Prostate gland (tissue), 2 donors: ENCODE measurements at regions of chr3 and their contacts with region 1.

Region 1: DNA sequence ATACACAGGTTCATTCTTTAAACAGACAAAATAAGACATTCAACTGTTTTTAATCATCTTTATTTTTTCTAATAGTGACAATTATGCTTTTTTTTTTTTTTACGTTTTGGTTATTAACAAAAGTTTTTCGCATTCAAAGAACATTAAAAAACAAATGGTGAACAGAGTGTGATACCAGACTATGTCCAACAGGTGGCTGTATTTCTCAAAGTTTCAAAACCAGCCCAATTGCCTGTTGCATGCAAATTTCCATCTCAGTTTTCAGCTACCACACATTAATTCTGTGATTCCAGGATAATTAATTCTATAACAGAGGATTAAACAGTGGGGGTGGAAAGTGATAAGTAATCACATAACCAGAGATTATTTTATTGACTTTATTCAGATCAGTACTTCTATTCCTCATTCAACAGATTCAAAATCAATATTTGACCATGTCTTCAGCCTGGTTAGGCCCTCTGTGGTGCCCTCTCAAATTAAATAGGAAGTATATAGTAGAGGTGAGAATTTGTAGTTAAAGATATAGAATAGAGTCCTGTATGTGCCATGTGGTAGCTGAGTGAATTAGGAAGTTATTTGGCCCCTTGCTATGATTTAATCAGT is 122.2 kb upstream of the DCBLD2 start:
- DNase-seq: no peak
- H3K4me3 ChIP-seq: no peak overlapping the region
- H3K27ac ChIP-seq: no peak overlapping the region
- H3K4me1 ChIP-seq: no peaks in the 10 kb centered on the region
- H3K27me3 ChIP-seq: no peaks in the 10 kb centered on the region
- CTCF ChIP-seq: peak; percentile 11 to 73 (median 60)
- POLR2A ChIP-seq: no peak

Region 2: DNA sequence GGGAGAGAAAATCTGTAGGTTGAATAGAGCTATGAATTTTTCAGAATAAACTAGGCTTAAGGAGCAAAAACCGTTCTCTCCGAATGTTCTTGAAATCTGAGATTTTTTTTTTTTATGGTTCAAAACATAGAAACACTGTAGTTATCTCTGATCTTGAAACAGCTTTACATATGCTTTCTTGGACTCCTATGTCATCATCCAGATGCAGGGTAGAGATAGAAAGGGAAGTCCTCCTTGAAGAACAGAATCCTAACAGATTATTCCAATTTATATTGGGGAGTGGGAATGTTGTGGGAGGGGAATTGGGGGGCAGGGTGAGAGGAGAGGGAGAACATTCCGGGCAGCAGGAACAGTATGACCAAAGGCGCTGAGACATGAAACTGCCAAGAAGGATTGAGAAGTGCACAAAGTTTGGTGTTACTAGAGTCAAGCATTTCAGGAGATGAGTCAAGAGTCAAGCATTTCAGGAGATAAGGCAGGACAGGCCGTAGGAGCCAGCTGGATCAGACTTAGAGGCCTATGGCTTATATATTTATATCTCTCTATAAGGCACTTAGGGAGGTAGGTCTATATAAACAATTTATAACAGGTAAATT is 282.5 kb before region 1 on chr3:
- intact Hi-C with region 1: no loop called
- DNase-seq: no peak
- H3K4me3 ChIP-seq: no peak overlapping the region
- H3K27ac ChIP-seq: no peak overlapping the region
- H3K4me1 ChIP-seq: no peaks in the 10 kb centered on the region
- H3K27me3 ChIP-seq: no peaks in the 10 kb centered on the region
- CTCF ChIP-seq: no peak
- POLR2A ChIP-seq: no peak

Region 3: DNA sequence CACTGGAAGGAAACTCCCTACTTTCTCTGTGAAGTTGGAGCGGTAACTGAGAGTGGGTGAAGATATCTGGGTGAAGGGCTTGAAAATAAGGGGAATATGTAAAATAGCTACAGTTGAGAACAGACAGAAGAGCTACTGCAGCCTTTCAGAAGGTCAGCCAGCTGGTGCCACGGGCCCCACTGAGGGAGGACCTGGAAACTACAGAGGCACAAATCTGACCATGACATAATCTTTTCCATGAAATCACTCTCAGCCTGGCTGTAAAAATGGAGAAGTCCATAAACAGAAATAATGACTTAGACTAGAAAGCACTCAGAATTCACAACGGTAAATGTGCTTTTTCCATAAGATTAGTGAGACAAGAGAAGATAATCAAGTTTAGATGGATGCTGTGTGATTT is 214.1 kb before region 1 on chr3:
- intact Hi-C with region 1: no loop called
- DNase-seq: no peak
- H3K4me3 ChIP-seq: no peak overlapping the region
- H3K27ac ChIP-seq: no peak overlapping the region
- H3K4me1 ChIP-seq: no peaks in the 10 kb centered on the region
- H3K27me3 ChIP-seq: no peaks in the 10 kb centered on the region
- CTCF ChIP-seq: no peak
- POLR2A ChIP-seq: no peak

Region 4: GRCh38 chr3:99172736-99173657 is 149.3 kb after region 1 on chr3:
- intact Hi-C with region 1: loop called (anchors 10 kb)
- DNase-seq: peak; percentile 27
- H3K4me3 ChIP-seq: no peak overlapping the region
- H3K27ac ChIP-seq: no peak overlapping the region
- H3K4me1 ChIP-seq: no peaks in the 10 kb centered on the region
- H3K27me3 ChIP-seq: no peaks in the 10 kb centered on the region
- CTCF ChIP-seq: peak; percentile 22 to 53 (median 46)
- POLR2A ChIP-seq: no peak

Region 5: DNA sequence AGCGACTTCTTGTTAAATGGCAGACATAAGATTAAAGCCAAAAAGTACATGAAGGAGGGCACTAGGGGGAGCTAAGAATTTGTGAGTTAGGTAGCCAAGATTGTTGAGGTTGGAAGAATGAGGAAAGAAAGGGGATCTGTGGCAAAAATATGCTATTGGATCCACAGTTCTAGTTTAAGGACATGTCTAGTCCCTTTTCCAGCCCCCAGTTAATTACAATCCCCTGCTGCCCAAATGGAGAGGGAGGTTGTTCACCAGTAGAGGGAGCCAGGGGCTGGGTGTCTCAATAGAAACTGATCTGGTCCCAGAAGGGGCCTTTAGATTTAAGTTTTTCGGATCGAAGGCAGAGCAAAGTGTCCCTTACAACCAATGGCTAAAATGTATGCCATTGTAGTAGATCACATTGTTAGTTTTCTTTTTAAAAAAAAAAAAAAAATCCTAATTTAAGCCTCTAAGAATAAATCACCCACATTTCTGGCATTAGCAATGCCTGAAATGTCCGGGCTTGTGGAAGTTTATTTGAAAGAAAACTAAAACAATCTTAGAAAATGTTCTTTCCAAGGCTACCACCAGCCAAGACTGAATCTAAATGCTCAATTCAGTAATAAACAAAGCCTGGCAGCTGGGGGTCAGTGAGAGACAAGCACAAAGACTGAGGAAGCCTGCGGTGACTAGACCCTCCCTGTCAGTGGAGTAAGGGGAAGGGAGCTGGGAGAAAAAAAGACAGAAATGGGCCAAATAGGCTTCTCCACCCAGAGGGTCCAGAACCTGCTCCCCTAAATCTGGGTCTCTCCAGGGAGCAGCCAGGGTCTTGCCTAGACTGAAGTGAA is 621.8 kb after region 1 on chr3:
- intact Hi-C with region 1: loop called (anchors 5 kb)
- DNase-seq: no peak
- H3K4me3 ChIP-seq: no peak overlapping the region
- H3K27ac ChIP-seq: peak overlapping the region; percentile 5 to 43
- H3K4me1 ChIP-seq: no peaks in the 10 kb centered on the region
- H3K27me3 ChIP-seq: no peaks in the 10 kb centered on the region
- CTCF ChIP-seq: peak in 3 of 4 experiments; percentile 20 to 34 (median 32)
- POLR2A ChIP-seq: no peak

Region 6: DNA sequence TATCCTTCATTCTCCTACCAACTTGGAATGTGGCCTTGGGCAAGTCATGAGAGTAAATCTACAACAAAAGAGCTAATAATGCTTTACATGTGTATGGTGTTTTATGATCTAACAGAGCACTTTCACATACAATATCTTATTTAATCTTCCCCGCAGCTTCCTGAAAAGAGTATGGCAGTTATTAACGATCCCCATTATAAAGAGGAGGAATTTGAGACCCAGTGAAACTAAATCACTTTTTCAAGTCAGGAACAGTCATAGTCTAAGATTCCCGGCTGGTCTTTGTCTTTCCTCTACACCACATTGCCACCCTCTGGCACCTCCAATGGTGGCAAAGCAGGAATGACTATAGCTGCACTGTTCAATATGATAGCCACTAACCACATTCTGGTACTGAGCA is 724.2 kb after region 1 on chr3:
- intact Hi-C with region 1: loop called (anchors 5 kb)
- DNase-seq: no peak
- H3K4me3 ChIP-seq: no peak overlapping the region
- H3K27ac ChIP-seq: no peak overlapping the region
- H3K4me1 ChIP-seq: no peaks in the 10 kb centered on the region
- H3K27me3 ChIP-seq: no peaks in the 10 kb centered on the region
- CTCF ChIP-seq: peak in 2 of 4 experiments; percentile 15 to 23
- POLR2A ChIP-seq: no peak

Region 7: GRCh38 chr3:99789011-99789721 is 765.5 kb after region 1 on chr3:
- intact Hi-C with region 1: loop called (anchors 10 kb)
- DNase-seq: no peak
- H3K4me3 ChIP-seq: no peak overlapping the region
- H3K27ac ChIP-seq: no peak overlapping the region
- H3K4me1 ChIP-seq: no peaks in the 10 kb centered on the region
- H3K27me3 ChIP-seq: no peaks in the 10 kb centered on the region
- CTCF ChIP-seq: peak in 2 of 4 experiments; percentile 36 to 45
- POLR2A ChIP-seq: no peak